K562 (cell line): ENCODE measurements at regions of chr16 and their contacts with region 1.

Region 1: DNA sequence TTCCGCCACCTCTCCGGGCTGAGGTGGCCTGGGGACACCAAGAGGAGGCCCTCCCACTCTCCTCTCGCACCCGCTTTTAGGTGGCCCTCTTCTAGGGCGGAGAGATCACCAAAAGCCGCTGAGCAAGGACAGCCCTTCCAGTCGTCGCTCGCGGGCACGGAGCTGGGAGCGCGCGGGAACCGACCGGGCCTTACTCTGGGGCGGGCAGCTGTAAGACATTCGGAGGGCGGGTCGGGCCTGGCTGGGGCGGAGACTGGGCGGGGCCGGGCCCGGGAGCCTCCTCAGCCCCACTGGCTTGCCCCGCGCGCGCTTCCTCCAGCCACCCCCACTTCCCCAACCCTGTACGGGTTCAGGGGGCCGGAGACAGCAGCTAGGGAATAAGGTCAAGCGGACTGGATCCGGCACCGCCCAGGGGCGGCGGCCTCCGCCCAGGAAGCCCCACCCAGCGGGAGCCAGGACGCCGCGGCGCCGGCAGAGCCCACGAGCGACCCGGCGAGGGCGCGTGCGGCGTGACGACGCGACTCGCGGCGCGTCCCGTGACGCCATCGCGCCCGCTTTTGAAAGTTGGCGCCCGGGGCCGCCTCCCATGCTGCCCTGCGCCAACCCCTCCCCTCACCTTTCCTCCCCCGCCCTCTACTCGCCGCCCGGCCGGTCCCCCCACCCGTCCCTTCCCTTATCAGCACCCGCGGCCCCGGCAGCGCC is 351 bp upstream of the CTCF start:
- DNase-seq: peak; percentile 93 to 98 (median 97)
- ATAC-seq: peak; percentile 94
- H3K4me3 ChIP-seq: peak overlapping the region; percentile 97
- H3K27ac ChIP-seq: peak overlapping the region; percentile 99
- H3K4me1 ChIP-seq: peaks cover 15 to 27% of the 10 kb centered on the region in 2 experiments; a peak in 4 of 5 replicates
- H3K27me3 ChIP-seq: no peaks in the 10 kb centered on the region
- CTCF ChIP-seq: peak in 1 of 3 experiments; percentile 26; a peak in 1 of 6 replicates
- EP300 ChIP-seq: 0 out of 2 replicates have a peak, but pooled peaks have one; percentile 29
- POLR2A ChIP-seq: peak; percentile 92
- RAD21 ChIP-seq: no peak

Region 2: GRCh38 chr16:67546761-67547422 is 15.1 kb before region 1 on chr16:
- CTCF ChIA-PET with region 1: interaction called, 4 read pairs
- POLR2A ChIA-PET with region 1: interaction called, 24 read pairs
- in situ Hi-C with region 1: no loop called
- intact Hi-C with region 1: no loop called
- DNase-seq: peak; percentile 77 to 81 (median 78)
- ATAC-seq: peak; percentile 82
- H3K4me3 ChIP-seq: no peak overlapping the region
- H3K27ac ChIP-seq: no peak overlapping the region
- H3K4me1 ChIP-seq: peaks cover 0 to 25% of the 10 kb centered on the region in 2 experiments; a peak in 2 of 5 replicates
- H3K27me3 ChIP-seq: no peaks in the 10 kb centered on the region
- CTCF ChIP-seq: peak; percentile 95 to 97 (median 97)
- EP300 ChIP-seq: no peak
- POLR2A ChIP-seq: no peak
- RAD21 ChIP-seq: peak; percentile 74 to 92

Region 3: DNA sequence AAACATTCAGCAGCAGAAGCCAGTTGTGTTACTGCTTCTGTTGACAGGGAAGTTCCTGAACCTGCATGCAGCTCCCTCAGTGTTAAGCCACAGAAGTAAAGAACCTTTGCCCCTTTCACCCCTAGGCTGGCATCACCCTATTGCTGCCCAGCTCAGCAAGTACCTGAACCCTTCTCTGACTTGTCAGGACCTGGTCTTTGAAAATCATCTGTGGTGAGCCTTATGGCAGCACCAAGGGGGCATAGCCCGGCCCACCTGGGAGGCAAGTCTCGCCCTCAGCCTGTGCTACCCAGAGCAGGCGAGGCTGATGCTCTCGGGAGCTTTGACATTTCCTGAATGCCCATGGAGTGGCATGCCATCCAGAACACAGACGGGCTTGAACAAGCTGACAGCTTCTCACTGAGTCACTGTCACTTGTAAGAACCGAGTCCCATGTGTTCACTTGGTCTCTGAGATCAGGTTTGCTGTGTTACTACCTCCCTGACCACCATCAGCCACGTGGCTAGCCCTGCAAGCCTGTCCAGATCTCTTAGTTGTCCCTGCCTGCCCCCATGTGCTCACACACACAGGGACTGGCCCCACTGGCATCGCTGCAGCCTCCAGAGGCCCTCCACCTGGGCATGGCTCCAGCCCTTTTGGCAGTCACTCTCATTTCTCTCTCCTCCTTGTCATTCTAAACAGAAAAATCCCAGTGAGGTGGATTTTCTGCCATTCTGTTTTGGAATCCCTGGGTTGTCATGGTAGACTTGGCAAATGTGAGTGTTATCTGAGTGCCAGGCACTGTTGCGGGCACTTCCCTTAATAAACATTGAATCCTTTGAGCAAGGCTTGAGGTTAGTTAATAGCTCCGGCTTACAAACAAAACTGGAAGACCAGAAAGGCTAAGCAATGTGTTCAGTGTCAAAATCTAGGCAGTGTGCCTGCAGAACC is 80.1 kb after region 1 on chr16:
- CTCF ChIA-PET with region 1: interaction called, 3 read pairs
- POLR2A ChIA-PET with region 1: interaction called, 4 read pairs
- in situ Hi-C with region 1: no loop called
- intact Hi-C with region 1: loop called (anchors 5 kb)
- DNase-seq: no peak
- ATAC-seq: no peak; the same call in 2 of the 3 replicates
- H3K4me3 ChIP-seq: no peak overlapping the region
- H3K27ac ChIP-seq: no peak overlapping the region
- H3K4me1 ChIP-seq: peaks cover 0 to 26% of the 10 kb centered on the region in 2 experiments; a peak in 2 of 5 replicates
- H3K27me3 ChIP-seq: peaks cover 0 to 5% of the 10 kb centered on the region in 2 experiments; a peak in 1 of 5 replicates
- CTCF ChIP-seq: 0 out of 6 replicates have a peak, but pooled peaks of 1 of the 3 experiments have one; percentile 12
- EP300 ChIP-seq: no peak
- POLR2A ChIP-seq: no peak
- RAD21 ChIP-seq: 0 out of 4 replicates have a peak, but pooled peaks of 1 of the 2 experiments have one; percentile 6

Region 4: GRCh38 chr16:67667817-67668494 is 106.0 kb after region 1 on chr16:
- CTCF ChIA-PET with region 1: interaction called, 8 read pairs
- POLR2A ChIA-PET with region 1: interaction called, 3 read pairs
- in situ Hi-C with region 1: no loop called
- intact Hi-C with region 1: loop called (anchors 2 kb)
- DNase-seq: peak; percentile 85 to 90 (median 86)
- ATAC-seq: peak; percentile 89
- H3K4me3 ChIP-seq: no peak overlapping the region
- H3K27ac ChIP-seq: no peak overlapping the region
- H3K4me1 ChIP-seq: peaks cover 14 to 39% of the 10 kb centered on the region in 2 experiments
- H3K27me3 ChIP-seq: no peaks in the 10 kb centered on the region
- CTCF ChIP-seq: peak; percentile 93 to 99 (median 96)
- EP300 ChIP-seq: no peak
- POLR2A ChIP-seq: no peak
- RAD21 ChIP-seq: peak; percentile 74 to 84